Gastrocnemius medialis (tissue), 4 donors: ENCODE measurements at regions of chr12 and their contacts with region 1.

Region 1: DNA sequence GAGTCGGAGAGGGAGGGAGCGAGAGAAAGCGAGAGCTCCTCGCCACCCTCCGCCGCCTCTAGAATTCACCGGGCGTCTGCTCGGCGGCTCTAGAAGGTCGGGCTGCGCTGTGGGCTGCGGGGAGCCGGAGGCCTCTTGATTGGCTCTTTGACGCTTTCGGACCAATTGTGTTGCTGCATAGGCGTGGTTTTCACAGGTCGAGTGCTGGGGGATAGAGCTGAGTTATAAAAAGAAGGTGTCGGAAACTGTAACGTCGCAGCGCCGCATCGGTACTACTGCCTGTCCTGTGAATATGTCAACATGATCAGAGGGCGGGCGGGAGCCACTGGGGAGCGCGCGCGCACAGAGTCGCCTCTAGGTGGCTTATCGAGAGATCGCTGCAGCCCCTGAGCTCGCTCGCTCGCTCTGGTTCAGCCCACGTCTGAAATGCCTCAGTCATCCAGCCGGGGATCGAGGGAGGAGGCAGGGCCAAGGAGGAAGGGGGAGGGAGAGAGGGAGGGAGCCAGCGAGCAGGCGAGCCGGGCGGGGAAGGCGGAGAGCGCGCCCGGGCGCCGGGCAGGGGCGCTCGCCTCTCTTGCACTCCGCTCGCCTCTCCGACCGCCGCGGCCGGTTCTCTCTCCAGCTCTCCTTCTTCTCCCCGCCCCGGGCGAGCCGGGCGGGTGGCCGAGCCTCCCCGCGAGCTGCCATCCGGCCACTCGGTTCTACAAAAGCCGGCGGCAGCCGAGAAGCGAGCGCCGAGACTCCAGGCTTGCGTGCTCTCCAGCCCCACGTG is at the start of gene TBX3:
- DNase-seq: peak; percentile 96 to 98
- ATAC-seq: peak; percentile 91 to 92
- H3K4me3 ChIP-seq: peak within 1 kb of the TSS; percentile 65 to 88 (median 76)
- H3K27ac ChIP-seq: peak within 1 kb of the TSS; percentile 85 to 97 (median 94)
- H3K4me1 ChIP-seq: peaks cover 12 to 15% of the 10 kb centered on the region in 2 donors
- H3K27me3 ChIP-seq: peaks cover 3 to 23% (median 15%) of the 10 kb centered on the region in 3 donors
- CTCF ChIP-seq: peak; percentile 39 to 72 (median 67)
- POLR2A ChIP-seq: peak; percentile 94 to 99
- total RNA-seq, gene TBX3: 7.5 to 16.7 (median 11.9) TPM

Region 2: DNA sequence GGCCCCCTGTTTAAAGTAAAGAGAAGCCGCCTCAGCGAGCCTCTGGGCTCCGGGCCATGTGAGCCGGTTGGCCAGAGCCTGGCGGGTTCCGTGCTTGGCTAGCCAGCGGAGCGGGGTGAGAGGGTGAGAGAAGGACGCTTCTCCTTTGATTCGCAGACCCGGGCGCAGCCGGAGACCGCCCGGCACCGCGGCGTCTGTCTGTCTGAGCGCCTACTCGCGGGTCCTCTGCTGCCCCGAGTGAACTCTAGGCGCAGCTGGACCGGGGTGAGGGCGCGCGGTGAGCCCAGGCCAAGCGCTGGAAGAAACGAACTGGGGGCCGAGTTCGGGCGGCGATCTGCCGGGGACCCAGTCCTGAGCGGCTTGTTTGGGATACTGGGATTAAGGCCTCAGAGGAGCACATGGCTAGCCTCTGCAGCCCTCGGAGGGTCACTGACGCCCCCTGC is 237.0 kb before region 1 on chr12:
- in situ Hi-C with region 1: no loop called
- intact Hi-C with region 1: no loop called
- DNase-seq: no peak
- ATAC-seq: no peak
- H3K4me3 ChIP-seq: no peak overlapping the region
- H3K27ac ChIP-seq: no peak overlapping the region
- H3K4me1 ChIP-seq: no peaks in the 10 kb centered on the region
- H3K27me3 ChIP-seq: peaks cover 54 to 66% (median 62%) of the 10 kb centered on the region in 3 donors
- CTCF ChIP-seq: no peak
- POLR2A ChIP-seq: no peak

Region 3: DNA sequence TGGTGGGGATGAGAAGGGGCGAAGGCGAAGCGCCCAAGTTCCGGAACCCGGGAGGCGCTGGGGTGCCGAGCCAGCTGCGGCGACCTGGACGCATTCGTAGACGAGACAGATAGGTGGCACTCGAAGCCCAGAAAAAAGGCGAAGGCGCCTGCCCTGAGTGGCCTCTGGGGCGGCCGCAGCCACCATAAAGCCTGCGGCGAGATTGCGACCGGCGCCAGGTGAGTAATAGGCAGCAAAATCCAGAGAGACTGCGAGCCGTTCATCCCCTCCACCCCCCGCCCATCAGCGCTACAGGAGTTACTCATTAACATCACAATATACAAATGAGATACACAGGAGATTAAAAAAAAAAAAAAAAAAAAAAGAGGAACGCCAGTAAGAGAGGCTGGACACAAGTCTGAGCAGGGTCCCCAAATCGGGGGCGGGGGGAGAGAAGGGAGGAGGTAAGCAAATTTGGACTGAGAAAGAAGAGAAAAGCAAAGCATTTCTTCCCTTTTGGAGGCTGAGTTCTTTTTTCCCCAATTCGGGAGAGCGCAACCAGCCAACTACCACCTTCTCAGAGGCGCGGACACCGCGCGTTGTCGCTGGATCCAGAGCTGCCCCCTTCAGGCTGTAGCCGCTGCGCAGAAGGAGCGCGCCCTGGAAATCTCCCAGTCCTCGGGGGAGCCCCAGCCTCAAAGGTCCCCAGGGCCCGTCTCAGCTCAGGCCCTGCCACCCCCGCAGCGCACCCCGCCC is 16.0 kb before region 1 on chr12:
- in situ Hi-C with region 1: no loop called
- intact Hi-C with region 1: loop called (anchors 2 kb)
- DNase-seq: peak; percentile 63 to 71
- ATAC-seq: peak; percentile 86 to 88
- H3K4me3 ChIP-seq: peak overlapping the region; percentile 52 to 73 (median 60)
- H3K27ac ChIP-seq: peak overlapping the region; percentile 42 to 80 (median 70)
- H3K4me1 ChIP-seq: peaks cover 2 to 4% of the 10 kb centered on the region in 2 donors
- H3K27me3 ChIP-seq: peaks cover 14 to 41% (median 40%) of the 10 kb centered on the region in 3 donors
- CTCF ChIP-seq: peak; percentile 40 to 73 (median 71)
- POLR2A ChIP-seq: no peak

Region 4: DNA sequence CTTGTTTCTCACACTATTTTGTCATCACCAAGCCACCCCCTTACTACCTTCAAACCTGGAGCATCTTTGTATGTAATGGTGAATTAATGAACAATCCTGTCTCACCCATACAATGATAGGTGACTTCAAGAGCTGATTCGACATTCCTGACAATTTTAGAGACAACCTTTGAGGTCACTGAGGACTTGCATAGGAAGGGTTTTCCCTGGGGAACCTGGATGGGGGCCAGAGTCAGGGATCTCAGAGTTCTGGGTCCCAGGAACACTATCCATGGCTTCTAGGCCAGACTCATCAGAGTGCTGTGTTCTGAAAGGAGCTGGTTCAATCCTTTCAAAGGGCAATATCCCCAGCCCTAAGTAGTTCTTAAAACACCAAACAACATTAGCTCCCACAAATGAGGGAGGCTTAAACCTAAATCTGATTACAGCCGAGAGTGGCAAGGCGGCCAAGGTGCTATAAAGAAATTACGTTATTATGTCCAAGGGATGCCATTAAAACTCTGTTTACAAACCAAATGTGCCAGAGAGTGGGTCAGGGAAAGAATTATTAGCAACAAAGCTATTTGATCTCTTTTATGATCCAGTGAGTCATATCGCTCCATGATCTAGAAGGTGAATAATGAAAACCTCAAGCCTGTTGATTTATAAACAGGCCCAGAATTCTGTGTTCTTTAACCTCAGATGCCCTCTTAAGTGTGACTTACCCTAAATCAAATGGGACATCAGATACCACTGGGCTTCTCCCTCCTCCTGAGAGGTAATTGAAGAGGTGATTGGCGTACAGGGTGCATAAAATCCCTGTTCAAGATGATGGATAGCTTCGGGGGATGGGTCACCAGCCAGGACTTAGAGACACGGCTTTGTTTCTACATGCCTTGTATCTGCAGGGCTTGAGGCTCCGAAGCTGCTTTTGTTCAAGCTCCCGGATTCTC is 229.9 kb after region 1 on chr12:
- in situ Hi-C with region 1: no loop called
- intact Hi-C with region 1: loop called (anchors 1 kb)
- DNase-seq: peak in 1 of 2 donors; percentile 13
- ATAC-seq: peak; percentile 82 to 87
- H3K4me3 ChIP-seq: no peak overlapping the region
- H3K27ac ChIP-seq: peak overlapping the region in 2 of 4 donors; percentile 16 to 61
- H3K4me1 ChIP-seq: no peaks in the 10 kb centered on the region
- H3K27me3 ChIP-seq: no peaks in the 10 kb centered on the region
- CTCF ChIP-seq: no peak
- POLR2A ChIP-seq: no peak

Region 5: GRCh38 chr12:115227137-115227615 is 542.9 kb after region 1 on chr12:
- in situ Hi-C with region 1: no loop called
- intact Hi-C with region 1: loop called (anchors 5 kb)
- DNase-seq: peak; percentile 87 to 97
- ATAC-seq: peak; percentile 94 to 96
- H3K4me3 ChIP-seq: no peak overlapping the region
- H3K27ac ChIP-seq: peak overlapping the region; percentile 83 to 92 (median 84)
- H3K4me1 ChIP-seq: peaks cover 14 to 36% of the 10 kb centered on the region in 2 donors
- H3K27me3 ChIP-seq: no peaks in the 10 kb centered on the region
- CTCF ChIP-seq: no peak
- POLR2A ChIP-seq: no peak

Region 6: DNA sequence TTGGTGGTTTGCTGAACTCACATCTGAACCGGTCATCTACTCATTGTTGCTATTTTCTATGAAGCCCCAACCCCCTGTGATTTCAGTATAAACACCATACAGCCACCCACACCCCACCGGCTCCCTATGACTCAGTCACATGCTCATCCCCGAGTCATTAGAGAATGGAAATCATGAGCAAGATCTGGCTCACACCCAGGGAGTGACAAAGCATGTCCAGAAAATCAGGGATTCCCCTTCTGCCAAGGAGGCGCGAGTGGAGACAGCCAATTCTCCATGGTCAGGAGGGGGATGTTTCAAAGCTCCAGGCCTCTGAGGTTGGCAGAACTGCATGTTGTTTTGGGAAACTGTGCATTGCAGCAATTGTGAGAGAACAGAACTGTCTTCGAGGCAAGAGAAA is 657.2 kb after region 1 on chr12:
- in situ Hi-C with region 1: loop called in 1 of 4 experiments (anchors 25 kb)
- intact Hi-C with region 1: loop called (anchors 5 kb)
- DNase-seq: peak; percentile 56 to 82
- ATAC-seq: peak; percentile 65 to 68
- H3K4me3 ChIP-seq: no peak overlapping the region
- H3K27ac ChIP-seq: peak overlapping the region; percentile 54 to 74 (median 64)
- H3K4me1 ChIP-seq: peaks cover 4 to 14% of the 10 kb centered on the region in 2 donors
- H3K27me3 ChIP-seq: no peaks in the 10 kb centered on the region
- CTCF ChIP-seq: no peak
- POLR2A ChIP-seq: no peak

Region 7: GRCh38 chr12:115451780-115452736 is 767.8 kb after region 1 on chr12:
- in situ Hi-C with region 1: no loop called
- intact Hi-C with region 1: loop called (anchors 10 kb)
- DNase-seq: no peak
- ATAC-seq: peak in 1 of 2 donors; percentile 40
- H3K4me3 ChIP-seq: peak overlapping the region; percentile 8 to 42 (median 36)
- H3K27ac ChIP-seq: peak overlapping the region in 2 of 4 donors; percentile 34 to 42
- H3K4me1 ChIP-seq: no peaks in the 10 kb centered on the region
- H3K27me3 ChIP-seq: no peaks in the 10 kb centered on the region
- CTCF ChIP-seq: no peak
- POLR2A ChIP-seq: no peak